Dorsolateral prefrontal cortex (tissue), 120 donors: ENCODE measurements at regions of chr13 and their contacts with region 1.

Region 1: GRCh38 chr13:45194081-45194939 is 6.5 kb downstream of the KCTD4 start:
- DNase-seq: peak; percentile 33 to 89 (median 84)
- H3K4me3 ChIP-seq: peak overlapping the region; percentile 14 to 76 (median 58)
- H3K27ac ChIP-seq: peak overlapping the region in 56 of 59 donors; percentile 7 to 88 (median 77)
- H3K27me3 ChIP-seq: no peaks in the 10 kb centered on the region
- CTCF ChIP-seq: peak; percentile 52 to 89 (median 71)

Region 2: DNA sequence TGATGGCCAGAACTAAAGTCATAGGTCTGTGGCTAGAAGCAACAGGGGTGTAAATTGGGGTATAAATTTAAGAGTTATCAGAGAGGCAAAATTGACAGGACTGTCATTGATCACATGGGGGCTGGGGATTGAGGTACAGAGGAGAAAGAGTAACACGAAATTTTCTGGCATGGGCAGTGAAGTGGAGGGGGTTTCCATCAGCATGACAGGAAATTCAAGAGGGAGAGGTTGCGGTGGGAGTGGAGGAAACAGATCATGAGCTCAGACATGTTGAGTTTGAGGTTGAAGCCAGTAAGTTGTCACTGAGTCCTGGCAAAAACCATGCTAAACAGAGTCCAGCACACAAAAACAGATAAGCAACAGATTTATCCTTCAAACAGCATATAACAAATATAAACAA is 426.1 kb before region 1 on chr13:
- intact Hi-C with region 1: no loop called
- DNase-seq: no peak
- H3K4me3 ChIP-seq: no peak overlapping the region
- H3K27ac ChIP-seq: no peak overlapping the region
- H3K27me3 ChIP-seq: peaks cover 0 to 5% (median 0%) of the 10 kb centered on the region in 45 donors
- CTCF ChIP-seq: no peak

Region 3: GRCh38 chr13:45047394-45048310 is 146.7 kb before region 1 on chr13:
- intact Hi-C with region 1: loop called (anchors 2 to 5 kb)
- DNase-seq: peak; percentile 59 to 87 (median 84)
- H3K4me3 ChIP-seq: peak overlapping the region; percentile 37 to 77 (median 59)
- H3K27ac ChIP-seq: peak overlapping the region in 58 of 59 donors; percentile 32 to 97 (median 84)
- H3K27me3 ChIP-seq: no peaks in the 10 kb centered on the region
- CTCF ChIP-seq: peak; percentile 80 to 97 (median 89)

Region 4: GRCh38 chr13:45102136-45102507 is 92.2 kb before region 1 on chr13:
- intact Hi-C with region 1: loop called (anchors 5 kb)
- DNase-seq: peak in 4 of 10 donors; percentile 48 to 63 (median 54)
- H3K4me3 ChIP-seq: peak overlapping the region in 21 of 59 donors; percentile 4 to 44 (median 23)
- H3K27ac ChIP-seq: peak overlapping the region; percentile 59 to 99 (median 92)
- H3K27me3 ChIP-seq: no peaks in the 10 kb centered on the region
- CTCF ChIP-seq: peak in 6 of 56 donors; percentile 7 to 34 (median 24)

Region 5: GRCh38 chr13:45310341-45311125 is 116.2 kb after region 1 on chr13:
- intact Hi-C with region 1: loop called (anchors 1 to 2 kb)
- DNase-seq: no peak
- H3K4me3 ChIP-seq: peak overlapping the region; percentile 32 to 85 (median 65)
- H3K27ac ChIP-seq: peak overlapping the region in 43 of 59 donors; percentile 2 to 86 (median 57)
- H3K27me3 ChIP-seq: no peaks in the 10 kb centered on the region
- CTCF ChIP-seq: no peak